Activated B cell treated with CpG ODN at 0.5 μM for 24 hours (primary cell): ENCODE measurements at regions of chr5 and their contacts with region 1.

Region 1: DNA sequence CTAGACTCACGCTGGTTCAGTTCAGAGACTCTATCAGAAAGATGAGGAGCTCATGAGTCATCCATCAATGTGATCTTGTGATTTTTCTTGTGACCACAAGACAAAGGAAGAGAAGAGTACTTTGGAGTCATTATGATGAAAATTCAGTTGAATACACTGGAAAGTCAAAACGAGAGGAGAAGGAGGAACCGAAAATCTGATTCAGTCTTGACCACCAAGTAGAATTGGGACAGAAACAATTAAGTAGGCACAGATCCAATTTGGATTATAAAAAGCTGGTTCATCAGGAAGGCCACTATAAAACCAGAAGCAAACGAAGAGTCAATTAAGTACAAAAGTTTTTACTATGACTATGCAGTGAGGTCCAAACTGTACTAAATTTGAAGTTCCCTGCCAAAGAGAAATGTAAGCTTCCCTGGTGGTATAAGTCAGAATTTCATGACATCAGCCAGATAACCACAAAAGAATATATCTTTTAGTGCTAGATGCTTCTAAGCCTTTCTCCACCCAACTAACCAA is 90.9 kb downstream of the THBS4 start:
- DNase-seq: no peak
- ATAC-seq: peak; percentile 78
- H3K4me3 Mint-ChIP-seq: peak overlapping the region; percentile 64
- H3K27ac Mint-ChIP-seq: peak overlapping the region; percentile 82
- H3K4me1 Mint-ChIP-seq: peaks cover 30% of the 10 kb centered on the region
- H3K27me3 Mint-ChIP-seq: no peaks in the 10 kb centered on the region
- CTCF ChIP-seq: no peak

Region 2: GRCh38 chr5:79872291-79872690 is 253.7 kb before region 1 on chr5:
- CTCF ChIA-PET with region 1: no interaction called
- POLR2A ChIA-PET with region 1: no interaction called
- intact Hi-C with region 1: no loop called
- DNase-seq: no peak
- ATAC-seq: no peak
- H3K4me3 Mint-ChIP-seq: no peak overlapping the region
- H3K27ac Mint-ChIP-seq: no peak overlapping the region
- H3K4me1 Mint-ChIP-seq: no peaks in the 10 kb centered on the region
- H3K27me3 Mint-ChIP-seq: peaks cover 9% of the 10 kb centered on the region
- CTCF ChIP-seq: no peak

Region 3: DNA sequence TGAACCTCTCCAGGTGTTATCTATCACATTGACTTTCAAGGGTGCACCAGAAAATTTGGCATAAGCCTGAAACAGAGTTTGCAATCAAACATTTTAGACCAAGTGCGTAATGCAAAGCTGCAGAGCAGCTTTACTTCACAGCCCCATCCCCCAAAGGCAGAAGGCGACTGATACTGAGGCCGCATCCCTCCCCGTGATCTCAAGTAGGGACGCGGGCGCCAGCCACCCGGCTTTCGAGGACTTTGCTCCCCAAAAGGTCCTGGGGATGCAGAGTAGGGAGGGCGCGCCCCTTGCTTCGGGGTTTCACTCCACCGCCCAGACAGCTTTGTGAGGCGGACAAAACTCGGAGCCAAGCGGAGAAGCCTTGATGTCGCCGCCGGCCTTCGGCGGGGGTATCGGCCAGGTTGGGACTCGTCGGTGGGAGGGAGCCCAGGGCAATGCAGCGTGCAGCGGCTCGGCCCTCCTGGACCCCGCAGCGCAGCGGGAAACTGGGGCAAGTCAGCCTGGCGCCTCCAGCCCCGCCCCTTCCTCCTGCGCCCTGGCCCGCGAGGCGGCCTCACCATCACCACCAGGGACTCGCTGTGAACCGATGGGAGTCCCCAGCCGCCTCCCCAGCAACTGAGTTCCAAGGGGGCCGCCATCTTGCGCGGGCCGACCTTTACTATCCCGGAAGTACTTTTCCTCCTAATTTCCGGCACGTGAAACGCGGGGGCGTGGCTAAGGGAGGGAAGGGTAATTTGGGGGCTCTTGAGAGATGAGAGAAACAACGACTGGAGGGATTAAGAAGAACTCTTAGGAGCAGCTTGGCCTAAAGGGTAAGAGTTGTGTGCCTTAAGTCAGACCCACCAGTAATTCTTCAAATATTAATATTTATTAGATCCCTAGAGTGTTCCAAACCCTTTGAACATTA is 135.2 kb before region 1 on chr5 and contains the start of gene MTX3:
- CTCF ChIA-PET with region 1: no interaction called
- POLR2A ChIA-PET with region 1: no interaction called
- intact Hi-C with region 1: loop called (anchors 5 kb)
- DNase-seq: peak; percentile 74
- ATAC-seq: peak; percentile 95
- H3K4me3 Mint-ChIP-seq: peak within 1 kb of the TSS; percentile 88
- H3K27ac Mint-ChIP-seq: peak within 1 kb of the TSS; percentile 84
- H3K4me1 Mint-ChIP-seq: peaks cover 23% of the 10 kb centered on the region
- H3K27me3 Mint-ChIP-seq: peaks cover 2% of the 10 kb centered on the region
- CTCF ChIP-seq: no peak
- total RNA-seq, gene MTX3: 20.0 and 21.4 TPM in 2 replicates

Region 4: GRCh38 chr5:80141147-80141671 is 15.2 kb after region 1 on chr5:
- CTCF ChIA-PET with region 1: no interaction called
- POLR2A ChIA-PET with region 1: interaction called, 3 read pairs
- intact Hi-C with region 1: loop called (anchors 2 kb)
- DNase-seq: no peak
- ATAC-seq: no peak
- H3K4me3 Mint-ChIP-seq: no peak overlapping the region
- H3K27ac Mint-ChIP-seq: no peak overlapping the region
- H3K4me1 Mint-ChIP-seq: peaks cover 39% of the 10 kb centered on the region
- H3K27me3 Mint-ChIP-seq: no peaks in the 10 kb centered on the region
- CTCF ChIP-seq: no peak